ENCODE measurements at regions of chr4 and their contacts with region 1.

Region 1: GRCh38 chr4:141307241-141307689 is 86.6 kb downstream of the ZNF330 start:
- DNase-seq: peak; percentile 72 to 76
- ATAC-seq: peak; percentile 94 to 99 (median 95)
- H3K4me3 ChIP-seq: no peak overlapping the region
- H3K4me3 Mint-ChIP-seq: peak overlapping the region; percentile 17
- H3K27ac ChIP-seq: no peak overlapping the region
- H3K27ac Mint-ChIP-seq: peak overlapping the region; percentile 14 to 62
- H3K4me1 ChIP-seq: peaks cover 8% of the 10 kb centered on the region
- H3K4me1 Mint-ChIP-seq: peaks cover 12 to 14% of the 10 kb centered on the region in 2 donors
- H3K27me3 ChIP-seq: no peaks in the 10 kb centered on the region
- H3K27me3 Mint-ChIP-seq: peaks cover 0 to 10% of the 10 kb centered on the region in 2 donors
- CTCF ChIP-seq: peak; percentile 57

Region 2: DNA sequence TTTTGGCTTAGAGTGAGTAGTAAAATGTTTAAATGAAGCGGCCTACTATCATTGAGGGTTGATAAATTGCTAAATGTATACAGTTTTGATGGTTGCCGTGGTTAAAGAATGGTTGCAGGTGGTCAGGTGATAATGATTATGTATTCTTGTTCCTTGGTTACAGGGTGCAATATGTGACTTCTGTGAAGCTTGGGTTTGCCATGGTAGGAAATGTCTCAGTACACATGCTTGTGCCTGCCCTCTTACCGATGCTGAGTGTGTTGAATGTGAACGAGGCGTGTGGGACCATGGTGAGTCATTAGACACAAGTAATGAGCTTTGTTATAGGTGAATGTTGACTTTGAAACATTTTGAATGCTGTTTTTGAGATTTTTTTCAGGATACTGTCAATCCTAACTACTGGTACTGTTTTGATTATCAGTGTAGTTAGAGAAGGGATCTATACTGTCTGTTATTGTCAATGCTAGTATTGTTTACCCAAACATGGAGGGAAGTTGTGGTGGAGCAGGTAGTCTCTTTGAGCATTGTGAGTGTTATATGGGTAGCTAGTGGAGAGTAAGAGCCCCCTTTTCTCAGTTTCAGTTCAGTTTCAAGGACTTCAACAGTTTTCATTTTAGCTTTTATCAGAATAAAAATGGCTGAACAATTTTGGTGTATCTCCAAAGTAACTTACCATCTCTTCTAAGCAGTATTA is 77.7 kb before region 1 on chr4:
- intact Hi-C with region 1: no loop called
- DNase-seq: no peak
- ATAC-seq: no peak
- H3K4me3 ChIP-seq: no peak overlapping the region
- H3K4me3 Mint-ChIP-seq: no peak overlapping the region
- H3K27ac ChIP-seq: no peak overlapping the region
- H3K27ac Mint-ChIP-seq: peak overlapping the region in 1 of 2 donors; percentile 82
- H3K4me1 ChIP-seq: no peaks in the 10 kb centered on the region
- H3K4me1 Mint-ChIP-seq: peaks cover 5 to 12% of the 10 kb centered on the region in 2 donors
- H3K27me3 ChIP-seq: no peaks in the 10 kb centered on the region
- H3K27me3 Mint-ChIP-seq: no peaks in the 10 kb centered on the region
- CTCF ChIP-seq: no peak

Region 3: DNA sequence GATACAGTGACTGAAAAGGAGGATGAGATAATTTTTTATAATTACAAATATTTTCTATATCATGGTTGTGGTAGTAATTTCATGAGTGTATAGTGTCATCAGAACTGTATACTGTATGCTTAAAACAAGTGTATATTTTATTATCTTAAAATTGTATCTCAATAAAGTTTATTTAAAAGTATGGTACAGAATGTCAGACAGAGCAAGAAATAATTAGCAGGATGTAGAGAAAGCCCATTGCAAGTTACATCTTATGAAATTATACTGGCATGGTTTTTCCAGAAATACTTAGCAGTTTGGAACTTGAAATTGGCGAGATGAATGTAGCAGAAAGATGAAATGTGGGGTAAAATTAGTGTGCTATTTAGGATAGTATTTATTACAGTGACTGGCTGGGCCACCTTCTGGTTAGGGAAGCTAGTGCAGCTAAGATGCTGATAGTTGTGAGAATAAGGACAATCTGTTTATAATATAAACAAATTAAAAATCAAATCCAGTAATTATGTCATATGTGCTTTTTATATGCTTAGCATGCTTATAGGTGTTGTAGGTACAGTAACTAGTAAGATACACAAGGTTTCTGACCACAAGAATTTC is 403.8 kb after region 1 on chr4:
- intact Hi-C with region 1: loop called (anchors 1 kb)
- DNase-seq: peak in 1 of 2 donors; percentile 8
- ATAC-seq: no peak
- H3K4me3 ChIP-seq: no peak overlapping the region
- H3K4me3 Mint-ChIP-seq: no peak overlapping the region
- H3K27ac ChIP-seq: no peak overlapping the region
- H3K27ac Mint-ChIP-seq: no peak overlapping the region
- H3K4me1 ChIP-seq: peaks cover 9% of the 10 kb centered on the region
- H3K4me1 Mint-ChIP-seq: peaks cover 34 to 39% of the 10 kb centered on the region in 2 donors
- H3K27me3 ChIP-seq: no peaks in the 10 kb centered on the region
- H3K27me3 Mint-ChIP-seq: no peaks in the 10 kb centered on the region
- CTCF ChIP-seq: no peak